ENCODE measurements at regions of chr1 and their contacts with region 1.

Region 1: DNA sequence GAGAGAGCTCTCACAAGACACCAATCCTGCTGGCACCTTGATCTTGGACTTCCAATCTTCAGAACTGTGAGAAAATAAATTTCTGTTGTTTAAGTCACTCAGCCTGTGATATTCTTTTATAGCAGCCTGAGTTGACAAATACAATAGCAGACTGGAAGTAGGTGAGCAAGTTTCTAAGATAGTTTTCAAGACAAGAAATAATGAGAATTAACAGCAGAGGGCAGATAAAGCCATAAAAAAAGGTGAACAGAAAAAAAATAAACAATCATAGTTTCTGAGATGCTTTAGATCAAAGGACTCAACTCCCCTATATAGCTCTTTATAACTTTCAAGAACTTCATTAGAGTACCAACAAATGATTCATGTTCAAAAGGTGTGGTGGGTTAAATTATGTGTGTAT is 119.8 kb downstream of the PLPPR5 start:
- DNase-seq: no peak
- H3K4me3 ChIP-seq: no peak overlapping the region
- H3K27ac ChIP-seq: no peak overlapping the region
- H3K4me1 ChIP-seq: no peaks in the 10 kb centered on the region
- H3K27me3 ChIP-seq: peaks cover 0 to 2% of the 10 kb centered on the region in 2 experiments
- CTCF ChIP-seq: no peak
- POLR2A ChIP-seq: no peak

Region 2: GRCh38 chr1:98651188-98651587 is 233.7 kb before region 1 on chr1:
- CTCF ChIA-PET with region 1: no interaction called
- POLR2A ChIA-PET with region 1: no interaction called
- dilution Hi-C with region 1: no loop called
- intact Hi-C with region 1: no loop called
- DNase-seq: no peak
- H3K4me3 ChIP-seq: no peak overlapping the region
- H3K27ac ChIP-seq: no peak overlapping the region
- H3K4me1 ChIP-seq: no peaks in the 10 kb centered on the region
- H3K27me3 ChIP-seq: peaks cover 0 to 2% of the 10 kb centered on the region in 2 experiments
- CTCF ChIP-seq: no peak
- POLR2A ChIP-seq: no peak

Region 3: DNA sequence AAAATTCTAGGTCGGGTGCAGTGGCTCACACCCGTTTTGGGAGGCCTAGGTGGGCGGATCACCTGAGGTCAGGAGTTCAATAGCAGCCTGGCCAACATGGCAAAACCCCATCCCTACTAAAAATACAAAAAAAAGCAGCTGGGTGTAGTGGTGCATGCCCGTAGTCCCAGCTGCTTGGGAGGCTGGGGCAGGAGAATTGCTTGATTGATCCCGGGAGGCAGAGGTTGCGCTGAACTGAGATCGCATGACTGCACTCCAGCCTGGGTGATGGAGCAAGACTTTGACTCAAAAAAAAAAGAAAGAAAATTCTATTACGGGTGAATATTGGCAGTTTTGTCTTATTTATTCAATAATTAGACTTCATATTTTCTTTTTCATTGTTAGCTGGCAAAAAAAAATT is 161.3 kb before region 1 on chr1:
- CTCF ChIA-PET with region 1: no interaction called
- POLR2A ChIA-PET with region 1: no interaction called
- dilution Hi-C with region 1: no loop called
- intact Hi-C with region 1: no loop called
- DNase-seq: no peak
- H3K4me3 ChIP-seq: no peak overlapping the region
- H3K27ac ChIP-seq: no peak overlapping the region
- H3K4me1 ChIP-seq: no peaks in the 10 kb centered on the region
- H3K27me3 ChIP-seq: no peaks in the 10 kb centered on the region
- CTCF ChIP-seq: no peak
- POLR2A ChIP-seq: no peak

Region 4: DNA sequence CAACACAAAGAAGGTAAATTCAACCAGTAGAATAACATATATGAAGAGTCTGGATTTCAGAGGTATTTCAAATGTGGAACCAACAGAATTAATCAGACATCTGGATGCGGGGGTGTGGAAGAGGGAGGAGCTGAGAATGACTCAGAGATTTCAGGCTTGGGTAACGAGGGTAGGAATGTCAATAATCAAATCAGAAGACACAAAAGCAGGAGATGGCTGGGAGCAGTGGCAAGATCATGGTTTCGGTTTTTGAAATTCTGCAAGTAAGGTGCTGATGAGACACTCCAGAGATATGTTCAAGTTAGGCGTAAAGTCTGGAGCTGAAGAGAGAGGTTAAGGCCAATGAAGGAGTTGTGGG is 55.8 kb after region 1 on chr1:
- CTCF ChIA-PET with region 1: interaction called, 12 read pairs
- POLR2A ChIA-PET with region 1: no interaction called
- dilution Hi-C with region 1: no loop called
- intact Hi-C with region 1: no loop called
- DNase-seq: no peak
- H3K4me3 ChIP-seq: no peak overlapping the region
- H3K27ac ChIP-seq: no peak overlapping the region
- H3K4me1 ChIP-seq: no peaks in the 10 kb centered on the region
- H3K27me3 ChIP-seq: peaks cover 4 to 5% of the 10 kb centered on the region in 2 experiments
- CTCF ChIP-seq: no peak
- POLR2A ChIP-seq: no peak

Region 5: DNA sequence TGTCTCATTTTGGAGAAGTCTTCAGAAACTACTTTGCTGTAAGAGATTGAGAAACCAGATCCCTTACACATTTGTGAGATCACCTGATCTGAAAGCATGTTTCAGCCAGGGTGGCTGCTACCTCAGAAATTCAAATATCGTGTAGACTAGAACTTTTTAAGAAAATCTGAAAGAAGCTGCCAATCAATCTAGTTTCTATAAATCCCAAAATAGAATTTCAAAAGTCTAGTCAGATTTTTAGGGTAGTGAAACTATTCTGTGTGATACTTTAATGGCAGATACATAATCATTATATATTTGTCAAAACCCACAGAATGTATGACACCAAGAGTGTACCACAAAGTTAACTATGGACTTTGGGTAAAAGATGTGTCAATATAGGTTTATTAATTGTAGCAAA is 199.7 kb after region 1 on chr1:
- CTCF ChIA-PET with region 1: no interaction called
- POLR2A ChIA-PET with region 1: no interaction called
- dilution Hi-C with region 1: no loop called
- intact Hi-C with region 1: loop called (anchors 10 kb)
- DNase-seq: no peak
- H3K4me3 ChIP-seq: no peak overlapping the region
- H3K27ac ChIP-seq: no peak overlapping the region
- H3K4me1 ChIP-seq: no peaks in the 10 kb centered on the region
- H3K27me3 ChIP-seq: peaks cover 0 to 2% of the 10 kb centered on the region in 2 experiments
- CTCF ChIP-seq: no peak
- POLR2A ChIP-seq: no peak

Region 6: GRCh38 chr1:99580451-99580850 is 695.6 kb after region 1 on chr1:
- CTCF ChIA-PET with region 1: no interaction called
- POLR2A ChIA-PET with region 1: no interaction called
- dilution Hi-C with region 1: no loop called
- intact Hi-C with region 1: no loop called
- DNase-seq: peak; percentile 92
- H3K4me3 ChIP-seq: no peak overlapping the region
- H3K27ac ChIP-seq: no peak overlapping the region
- H3K4me1 ChIP-seq: no peaks in the 10 kb centered on the region
- H3K27me3 ChIP-seq: no peaks in the 10 kb centered on the region
- CTCF ChIP-seq: no peak
- POLR2A ChIP-seq: no peak